ENCODE measurements at regions of chr10 and their contacts with region 1.

Region 1: GRCh38 chr10:104309976-104310674 is 28.1 kb downstream of the ITPRIP start:
- DNase-seq: peak; percentile 77
- ATAC-seq: peak; percentile 87
- H3K4me3 ChIP-seq: no peak overlapping the region
- H3K27ac ChIP-seq: peak overlapping the region; percentile 54
- H3K4me1 ChIP-seq: peaks cover 23% of the 10 kb centered on the region
- H3K27me3 ChIP-seq: no peaks in the 10 kb centered on the region
- CTCF ChIP-seq: no peak

Region 2: DNA sequence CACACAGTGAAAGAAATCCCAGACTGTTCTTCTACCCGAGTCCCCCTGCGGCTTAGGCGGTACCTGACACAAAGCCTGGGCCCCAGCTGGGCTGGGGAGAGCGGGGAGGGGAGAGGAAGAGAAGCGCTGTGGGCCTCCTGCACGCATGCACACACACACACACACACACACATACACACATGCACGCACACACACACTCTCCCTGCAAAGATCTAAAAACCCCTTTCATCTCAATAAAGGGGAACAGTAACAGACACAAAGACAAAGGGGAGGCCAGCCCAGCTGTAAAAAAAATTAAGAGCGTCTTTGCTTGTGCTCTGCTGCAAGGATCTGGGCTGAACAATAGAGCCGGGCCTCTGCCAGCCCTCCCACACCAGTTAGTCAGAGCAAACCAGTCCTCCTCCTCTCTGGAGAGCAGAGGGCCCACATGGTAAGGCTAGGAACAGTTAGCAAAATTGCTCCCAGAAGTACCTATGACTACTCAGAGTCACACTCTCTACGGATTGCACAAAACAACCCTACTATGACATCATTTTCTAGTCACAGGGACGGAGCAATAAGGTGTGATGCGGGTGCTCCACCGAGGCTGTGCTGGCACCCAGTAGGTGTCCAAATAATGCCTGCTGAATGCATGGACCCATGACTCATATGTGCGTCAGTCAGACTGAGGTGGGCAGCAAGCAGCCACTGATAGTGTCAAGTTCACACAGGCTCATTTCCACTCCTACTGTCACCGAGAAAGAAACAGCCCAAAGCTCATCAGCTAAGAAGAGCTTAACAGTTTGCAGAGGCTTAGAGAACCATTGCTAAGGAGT is 19.0 kb after region 1 on chr10:
- CTCF ChIA-PET with region 1: interaction called, 3 read pairs
- POLR2A ChIA-PET with region 1: no interaction called
- intact Hi-C with region 1: loop called (anchors 2 kb)
- DNase-seq: peak; percentile 90
- ATAC-seq: peak; percentile 55
- H3K4me3 ChIP-seq: peak overlapping the region; percentile 56
- H3K27ac ChIP-seq: peak overlapping the region; percentile 99
- H3K4me1 ChIP-seq: peaks cover 71% of the 10 kb centered on the region
- H3K27me3 ChIP-seq: no peaks in the 10 kb centered on the region
- CTCF ChIP-seq: no peak

Measured in PC-3 (cell line).